ENCODE measurements at regions of chr6 and their contacts with region 1.

Region 1: DNA sequence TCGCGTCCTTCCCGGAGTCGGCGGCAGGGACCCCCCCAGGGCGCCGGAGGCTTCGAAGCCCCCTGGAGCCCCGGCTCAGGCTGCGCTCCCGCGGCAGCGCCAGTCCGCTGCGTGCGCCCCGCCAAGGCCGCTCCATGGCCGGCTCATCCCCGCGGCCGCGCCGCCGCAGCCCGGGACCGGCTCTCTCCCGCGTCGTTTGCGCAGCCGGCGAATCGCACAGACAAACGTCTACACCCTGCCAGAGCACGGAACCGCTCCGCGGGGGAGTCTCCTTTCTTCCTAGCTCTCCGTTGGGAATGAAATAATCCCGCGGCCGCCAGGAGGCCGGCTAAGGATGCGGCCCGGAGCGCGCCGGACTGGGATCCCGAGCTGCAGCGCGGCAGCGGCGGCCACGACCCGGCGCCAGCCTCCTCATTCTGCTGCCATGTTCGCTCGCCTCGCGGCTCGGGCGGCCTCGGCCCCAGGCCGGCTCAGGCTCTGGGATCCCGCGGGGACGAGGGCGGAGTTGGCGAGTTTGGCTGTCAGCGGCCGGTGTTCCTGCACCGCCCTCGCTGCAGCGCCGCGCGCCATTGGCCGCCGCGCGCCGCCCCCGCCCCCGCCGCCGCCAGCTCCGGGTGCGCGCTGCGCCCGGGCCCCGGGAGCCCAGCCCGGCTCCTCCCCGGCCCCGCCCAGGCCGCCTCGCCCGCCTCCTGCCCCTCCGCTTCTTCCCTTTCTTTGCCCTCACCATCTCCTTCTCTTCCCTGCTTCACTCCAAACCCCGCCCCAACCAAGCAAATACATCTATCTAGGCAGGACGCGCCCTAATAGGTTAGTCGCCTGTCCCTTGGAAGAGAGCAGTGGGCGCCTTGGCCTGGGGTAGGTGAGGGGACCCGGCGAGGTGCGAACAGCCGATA is at the start of gene GFOD1:
- DNase-seq: peak; percentile 84
- H3K4me3 ChIP-seq: peak within 1 kb of the TSS; percentile 56 to 79 (median 62)
- H3K27ac ChIP-seq: peak within 1 kb of the TSS; percentile 29
- H3K4me1 ChIP-seq: peaks cover 23% of the 10 kb centered on the region
- H3K27me3 ChIP-seq: no peaks in the 10 kb centered on the region
- CTCF ChIP-seq: peak; percentile 14 to 34
- POLR2A ChIP-seq: peak; percentile 90
- total RNA-seq, gene GFOD1: 24.1 and 26.3 TPM in 2 replicates

Region 2: GRCh38 chr6:13336553-13336952 is 150.8 kb before region 1 on chr6:
- CTCF ChIA-PET with region 1: interaction called, 16 read pairs
- POLR2A ChIA-PET with region 1: interaction called, 4 read pairs
- dilution Hi-C with region 1: no loop called
- intact Hi-C with region 1: loop called (anchors 1 kb)
- DNase-seq: peak; percentile 85
- H3K4me3 ChIP-seq: no peak overlapping the region
- H3K27ac ChIP-seq: no peak overlapping the region
- H3K4me1 ChIP-seq: peaks cover 13% of the 10 kb centered on the region
- H3K27me3 ChIP-seq: no peaks in the 10 kb centered on the region
- CTCF ChIP-seq: peak; percentile 82 to 85
- POLR2A ChIP-seq: no peak

Region 3: GRCh38 chr6:13373488-13373886 is 113.9 kb before region 1 on chr6:
- CTCF ChIA-PET with region 1: interaction called, 13 read pairs
- POLR2A ChIA-PET with region 1: no interaction called
- dilution Hi-C with region 1: no loop called
- intact Hi-C with region 1: no loop called
- DNase-seq: peak; percentile 67
- H3K4me3 ChIP-seq: no peak overlapping the region
- H3K27ac ChIP-seq: no peak overlapping the region
- H3K4me1 ChIP-seq: peaks cover 12% of the 10 kb centered on the region
- H3K27me3 ChIP-seq: no peaks in the 10 kb centered on the region
- CTCF ChIP-seq: no peak
- POLR2A ChIP-seq: no peak

Region 4: DNA sequence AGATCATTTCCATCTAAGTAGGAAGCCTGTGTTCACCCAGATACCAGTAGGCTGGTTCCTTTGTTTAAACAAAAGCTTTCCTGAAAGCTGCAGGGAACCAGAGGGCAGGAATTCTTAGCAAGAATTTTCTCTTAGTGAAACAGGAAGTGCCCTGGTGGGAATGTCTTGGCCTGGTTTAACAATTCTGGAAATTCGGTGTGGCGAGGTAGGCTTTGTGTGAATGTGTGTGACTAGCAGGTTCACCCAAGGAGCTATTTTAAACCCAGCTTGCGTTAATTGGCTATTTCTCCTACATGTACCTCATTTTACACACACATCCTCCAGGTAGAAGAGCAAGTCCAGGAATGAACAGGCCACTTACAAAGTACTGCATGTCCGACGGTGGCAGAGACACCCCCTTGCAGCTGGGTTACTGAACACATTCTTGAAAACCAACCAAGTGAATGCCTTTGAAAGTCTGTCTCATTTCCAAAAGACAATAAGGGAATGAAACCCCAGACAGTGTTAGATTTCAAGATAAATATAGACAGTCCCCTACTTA is 64.6 kb before region 1 on chr6:
- CTCF ChIA-PET with region 1: interaction called, 7 read pairs
- POLR2A ChIA-PET with region 1: no interaction called
- dilution Hi-C with region 1: no loop called
- intact Hi-C with region 1: loop called (anchors 2 kb)
- DNase-seq: peak; percentile 95
- H3K4me3 ChIP-seq: peak overlapping the region in 1 of 3 experiments; percentile 19
- H3K27ac ChIP-seq: peak overlapping the region; percentile 92
- H3K4me1 ChIP-seq: peaks cover 44% of the 10 kb centered on the region
- H3K27me3 ChIP-seq: no peaks in the 10 kb centered on the region
- CTCF ChIP-seq: no peak
- POLR2A ChIP-seq: no peak

Region 5: GRCh38 chr6:13511913-13512717 is 24.7 kb after region 1 on chr6:
- CTCF ChIA-PET with region 1: interaction called, 3 read pairs
- POLR2A ChIA-PET with region 1: interaction called, 14 read pairs
- dilution Hi-C with region 1: no loop called
- intact Hi-C with region 1: no loop called
- DNase-seq: peak; percentile 66
- H3K4me3 ChIP-seq: no peak overlapping the region
- H3K27ac ChIP-seq: no peak overlapping the region
- H3K4me1 ChIP-seq: peaks cover 3% of the 10 kb centered on the region
- H3K27me3 ChIP-seq: no peaks in the 10 kb centered on the region
- CTCF ChIP-seq: no peak
- POLR2A ChIP-seq: no peak

Region 6: DNA sequence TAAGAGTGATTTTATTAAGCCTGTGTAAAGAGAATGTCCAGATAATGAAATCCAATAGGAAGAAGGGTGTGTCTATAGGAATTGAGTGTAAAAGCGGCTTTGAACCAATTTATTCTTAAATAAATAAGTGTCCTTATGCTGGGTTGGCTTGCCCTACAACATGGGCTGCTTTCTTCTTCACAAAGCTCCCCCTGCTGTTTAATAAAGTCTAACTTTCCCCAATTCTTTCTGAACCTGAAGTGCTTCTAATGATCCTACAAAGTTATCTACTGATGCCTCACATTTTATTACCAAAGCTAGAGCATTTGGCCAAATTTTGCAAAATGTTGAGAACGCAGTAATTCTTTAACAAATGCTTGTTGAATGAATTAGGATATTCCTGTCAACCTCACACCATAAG is 50.7 kb after region 1 on chr6:
- CTCF ChIA-PET with region 1: interaction called, 27 read pairs
- POLR2A ChIA-PET with region 1: no interaction called
- dilution Hi-C with region 1: no loop called
- intact Hi-C with region 1: loop called (anchors 1 kb)
- DNase-seq: peak; percentile 68
- H3K4me3 ChIP-seq: no peak overlapping the region
- H3K27ac ChIP-seq: no peak overlapping the region
- H3K4me1 ChIP-seq: peaks cover 9% of the 10 kb centered on the region
- H3K27me3 ChIP-seq: no peaks in the 10 kb centered on the region
- CTCF ChIP-seq: peak; percentile 23 to 25
- POLR2A ChIP-seq: no peak

Region 7: GRCh38 chr6:13696226-13696625 is 208.9 kb after region 1 on chr6:
- CTCF ChIA-PET with region 1: no interaction called
- POLR2A ChIA-PET with region 1: no interaction called
- dilution Hi-C with region 1: no loop called
- intact Hi-C with region 1: no loop called
- DNase-seq: no peak
- H3K4me3 ChIP-seq: no peak overlapping the region
- H3K27ac ChIP-seq: no peak overlapping the region
- H3K4me1 ChIP-seq: no peaks in the 10 kb centered on the region
- H3K27me3 ChIP-seq: no peaks in the 10 kb centered on the region
- CTCF ChIP-seq: no peak
- POLR2A ChIP-seq: no peak

Region 8: DNA sequence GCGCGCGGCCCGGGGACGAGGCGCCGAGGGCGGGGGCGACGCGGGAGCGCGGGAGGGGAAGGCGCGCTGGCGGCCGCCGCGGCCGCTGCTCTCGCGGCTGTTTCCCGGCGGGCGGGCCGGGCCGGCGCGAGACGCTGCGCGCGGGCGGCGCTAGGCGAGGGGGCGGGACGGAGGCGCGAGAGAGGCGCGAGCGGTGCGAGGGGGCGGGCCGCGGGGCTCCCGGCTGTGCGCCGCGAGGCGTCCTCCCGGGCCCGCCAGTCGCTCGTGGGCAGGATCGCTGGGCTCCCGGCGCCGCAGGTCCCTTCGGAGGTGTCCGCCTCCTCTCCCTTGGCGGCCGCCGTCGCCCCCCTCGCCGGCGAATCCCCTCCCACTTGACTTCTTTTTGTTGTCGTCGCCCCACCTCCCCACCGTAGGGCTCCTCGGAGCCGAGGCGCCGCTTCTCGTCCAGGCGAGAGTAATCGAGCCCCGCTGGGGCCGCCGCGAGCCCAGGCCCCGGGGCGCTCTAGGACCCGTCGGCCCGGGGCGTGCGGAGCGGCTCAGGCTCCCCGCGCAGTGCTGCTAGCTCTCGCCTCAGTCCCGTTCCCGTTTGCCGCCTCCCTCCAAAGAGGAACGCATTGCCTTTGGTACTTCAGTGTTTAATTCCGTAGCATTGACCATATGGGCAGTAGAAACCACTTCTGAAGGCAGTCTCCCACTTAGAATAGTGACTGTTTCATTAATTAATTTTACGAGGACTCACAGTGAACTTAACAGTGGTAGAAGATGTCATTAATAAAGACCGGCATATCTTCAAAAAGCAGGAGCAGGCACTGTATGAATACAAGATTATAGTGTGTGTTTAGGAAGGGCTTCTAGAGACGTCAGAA is 224.6 kb after region 1 on chr6 and contains the start of gene RANBP9:
- CTCF ChIA-PET with region 1: no interaction called
- POLR2A ChIA-PET with region 1: no interaction called
- dilution Hi-C with region 1: no loop called
- intact Hi-C with region 1: loop called (anchors 5 kb)
- DNase-seq: peak; percentile 90
- H3K4me3 ChIP-seq: peak within 1 kb of the TSS; percentile 79 to 99 (median 95)
- H3K27ac ChIP-seq: peak within 1 kb of the TSS; percentile 74
- H3K4me1 ChIP-seq: peaks cover 25% of the 10 kb centered on the region
- H3K27me3 ChIP-seq: no peaks in the 10 kb centered on the region
- CTCF ChIP-seq: no peak
- POLR2A ChIP-seq: peak; percentile 75
- total RNA-seq, gene RANBP9: 40.2 and 44.4 TPM in 2 replicates